ENCODE measurements at regions of chr4 and their contacts with region 1.

Region 1: DNA sequence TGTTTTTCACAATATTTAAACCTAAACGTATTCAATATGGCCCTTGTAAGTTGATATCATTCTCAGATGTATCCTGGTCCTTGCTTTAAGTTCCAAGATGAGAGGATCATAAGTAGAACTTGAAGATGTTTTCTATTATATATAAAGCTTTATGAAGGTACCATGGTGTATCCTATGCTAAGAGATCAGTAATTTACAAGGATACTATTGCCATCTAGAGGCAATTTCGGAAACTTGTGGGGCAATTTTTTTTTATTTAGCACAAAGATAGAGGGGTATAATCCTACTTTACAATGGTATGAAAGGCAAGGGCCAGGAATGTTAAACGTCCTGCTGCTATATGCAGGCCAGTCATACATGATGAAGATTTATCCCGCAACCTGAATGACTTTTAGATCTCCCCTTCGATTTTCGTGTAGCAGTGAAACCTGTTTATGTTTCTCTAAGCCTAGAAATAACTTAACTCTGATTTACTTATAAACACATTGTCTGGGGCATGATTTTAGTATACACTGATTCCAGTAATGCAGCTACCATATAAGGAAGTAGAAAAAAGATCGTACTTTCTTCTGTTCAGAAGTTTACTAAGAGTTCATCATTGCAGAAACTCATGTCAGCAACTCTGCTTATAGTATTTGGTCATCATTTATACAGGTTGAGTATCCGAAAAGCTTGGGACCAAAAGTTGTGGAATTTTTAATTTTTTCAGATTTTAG is 2.6 kb downstream of the SLC25A31 start:
- DNase-seq: peak in 1 of 2 experiments; percentile 31
- H3K4me3 ChIP-seq: no peak overlapping the region
- H3K4me3 Mint-ChIP-seq: no peak overlapping the region
- H3K27ac Mint-ChIP-seq: no peak overlapping the region
- H3K4me1 ChIP-seq: no peaks in the 10 kb centered on the region
- H3K4me1 Mint-ChIP-seq: no peaks in the 10 kb centered on the region
- H3K27me3 ChIP-seq: no peaks in the 10 kb centered on the region
- H3K27me3 Mint-ChIP-seq: no peaks in the 10 kb centered on the region
- CTCF ChIP-seq: peak; percentile 31 to 54

Region 2: DNA sequence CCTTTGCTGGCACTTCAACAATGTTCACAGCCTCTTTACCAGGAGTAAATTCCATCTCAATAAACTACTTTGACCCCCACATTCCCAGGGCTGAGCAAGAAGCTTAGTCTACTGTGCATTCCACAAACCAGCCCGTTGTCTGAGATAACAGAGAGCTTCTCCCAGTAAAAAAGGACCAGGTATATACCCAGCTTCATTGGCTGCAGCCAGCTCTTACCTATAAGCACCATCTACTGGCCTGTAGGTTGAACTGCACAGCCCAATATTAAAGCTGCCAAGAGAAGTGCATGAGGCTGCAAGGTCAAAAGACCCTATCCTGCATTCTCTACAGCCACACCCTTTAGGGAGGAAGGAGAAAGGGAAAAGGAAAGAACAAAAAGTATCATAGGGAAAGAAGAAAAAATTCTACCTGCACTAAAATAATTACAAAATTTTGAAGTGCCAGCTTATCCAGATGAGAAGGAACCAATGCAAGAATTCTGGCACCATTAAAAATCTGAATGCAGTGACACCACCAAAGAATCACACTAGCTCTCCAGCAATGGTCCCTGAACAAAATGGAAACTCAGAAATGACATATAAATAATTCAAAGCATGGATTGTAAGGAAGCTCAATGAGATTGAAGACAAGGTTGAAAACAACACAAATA is 145.7 kb before region 1 on chr4:
- CTCF ChIA-PET with region 1: interaction called, 12 read pairs
- POLR2A ChIA-PET with region 1: no interaction called
- intact Hi-C with region 1: no loop called
- DNase-seq: peak; percentile 49 to 56
- H3K4me3 ChIP-seq: no peak overlapping the region
- H3K4me3 Mint-ChIP-seq: no peak overlapping the region
- H3K27ac Mint-ChIP-seq: no peak overlapping the region
- H3K4me1 ChIP-seq: no peaks in the 10 kb centered on the region
- H3K4me1 Mint-ChIP-seq: no peaks in the 10 kb centered on the region
- H3K27me3 ChIP-seq: no peaks in the 10 kb centered on the region
- H3K27me3 Mint-ChIP-seq: peaks cover 6% of the 10 kb centered on the region
- CTCF ChIP-seq: peak; percentile 62 to 66

Region 3: DNA sequence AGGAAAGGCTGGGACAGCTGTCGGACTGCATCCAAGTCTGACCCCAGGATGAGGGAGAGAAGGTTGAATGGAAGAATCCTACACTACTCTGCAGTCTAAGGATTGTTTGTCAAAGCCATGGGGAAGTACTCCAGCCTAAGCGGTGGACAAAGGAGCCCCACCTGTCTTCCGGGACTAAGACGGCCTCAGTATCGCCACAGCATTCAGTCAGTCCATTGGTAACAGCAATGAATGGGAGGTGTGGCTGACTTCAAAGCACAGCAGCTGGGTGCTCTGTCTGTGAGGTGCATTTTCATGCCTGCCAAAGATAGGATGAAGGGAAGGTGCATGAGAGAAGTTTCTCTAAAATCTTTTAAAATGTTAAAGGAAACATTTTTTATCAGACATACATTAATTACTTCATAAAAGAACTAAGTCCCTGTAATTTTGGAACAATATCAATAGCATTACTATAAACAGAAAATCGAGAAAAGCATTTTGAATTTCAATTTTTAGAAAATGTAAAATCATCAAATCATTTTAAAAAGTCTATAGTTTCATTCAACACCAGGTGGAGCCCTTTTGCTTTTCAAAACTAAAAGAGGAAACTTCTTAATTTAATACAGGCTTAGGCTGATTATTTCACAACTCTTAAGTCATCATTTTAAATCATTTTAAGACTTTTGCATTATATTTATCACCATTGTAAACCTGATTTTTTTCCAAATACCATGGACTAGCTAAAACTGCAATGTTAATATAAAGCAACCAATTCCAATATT is 127.6 kb before region 1 on chr4:
- CTCF ChIA-PET with region 1: interaction called, 9 read pairs
- POLR2A ChIA-PET with region 1: no interaction called
- intact Hi-C with region 1: loop called (anchors 1 kb)
- DNase-seq: no peak
- H3K4me3 ChIP-seq: no peak overlapping the region
- H3K4me3 Mint-ChIP-seq: no peak overlapping the region
- H3K27ac Mint-ChIP-seq: no peak overlapping the region
- H3K4me1 ChIP-seq: no peaks in the 10 kb centered on the region; the same call in 1 of the 2 replicates
- H3K4me1 Mint-ChIP-seq: no peaks in the 10 kb centered on the region
- H3K27me3 ChIP-seq: no peaks in the 10 kb centered on the region
- H3K27me3 Mint-ChIP-seq: peaks cover 2% of the 10 kb centered on the region
- CTCF ChIP-seq: peak in 1 of 2 experiments; percentile 40

Region 4: DNA sequence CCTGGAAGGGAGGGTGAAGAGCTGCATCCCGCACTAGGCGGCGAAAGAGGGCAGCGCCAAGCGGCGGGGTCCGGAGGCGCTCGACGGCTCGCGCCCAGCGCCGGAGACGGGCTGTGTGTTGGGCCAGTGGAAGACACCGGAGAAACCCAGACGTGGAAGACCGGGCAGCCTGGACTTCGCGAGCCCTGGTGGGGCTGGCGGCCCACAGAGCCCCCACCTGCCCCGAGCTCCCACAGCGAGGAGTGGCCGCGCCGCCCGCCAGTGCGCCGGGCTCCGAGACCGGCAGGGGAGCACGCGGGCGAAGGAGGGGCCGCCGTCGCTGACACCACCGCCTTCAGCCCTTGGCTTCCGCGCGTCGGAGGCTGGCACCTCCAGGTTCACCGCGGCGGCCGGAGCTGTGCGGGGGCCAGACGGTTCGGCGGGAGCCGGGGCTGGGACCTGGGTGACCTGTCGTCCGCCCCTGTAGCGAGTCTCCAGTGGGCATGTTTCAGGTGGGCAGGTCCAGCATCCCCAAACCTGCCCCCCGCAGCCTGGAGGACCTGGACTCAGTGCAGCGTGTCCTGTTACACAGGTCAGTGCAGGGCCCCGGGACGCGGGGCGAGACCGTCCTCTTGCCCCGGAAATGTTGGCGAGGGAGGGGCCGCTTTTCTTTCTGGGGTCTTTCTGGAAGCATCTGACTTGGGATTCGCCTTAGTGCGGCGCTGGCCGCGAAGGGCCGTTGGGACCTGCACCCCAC is 109.7 kb before region 1 on chr4:
- CTCF ChIA-PET with region 1: interaction called, 8 read pairs
- POLR2A ChIA-PET with region 1: no interaction called
- intact Hi-C with region 1: loop called (anchors 5 kb)
- DNase-seq: peak; percentile 65 to 70
- H3K4me3 ChIP-seq: peak overlapping the region; percentile 34
- H3K4me3 Mint-ChIP-seq: peak overlapping the region; percentile 71
- H3K27ac Mint-ChIP-seq: no peak overlapping the region
- H3K4me1 ChIP-seq: no peaks in the 10 kb centered on the region
- H3K4me1 Mint-ChIP-seq: no peaks in the 10 kb centered on the region
- H3K27me3 ChIP-seq: no peaks in the 10 kb centered on the region
- H3K27me3 Mint-ChIP-seq: peaks cover 16% of the 10 kb centered on the region
- CTCF ChIP-seq: peak; percentile 25 to 55

Region 5: GRCh38 chr4:127788517-127788916 is 55.7 kb after region 1 on chr4:
- CTCF ChIA-PET with region 1: no interaction called
- POLR2A ChIA-PET with region 1: no interaction called
- intact Hi-C with region 1: loop called (anchors 1 kb)
- DNase-seq: peak in 1 of 2 experiments; percentile 35
- H3K4me3 ChIP-seq: no peak overlapping the region
- H3K4me3 Mint-ChIP-seq: no peak overlapping the region
- H3K27ac Mint-ChIP-seq: no peak overlapping the region
- H3K4me1 ChIP-seq: peaks cover 7% of the 10 kb centered on the region; the same call in 1 of the 2 replicates
- H3K4me1 Mint-ChIP-seq: no peaks in the 10 kb centered on the region
- H3K27me3 ChIP-seq: no peaks in the 10 kb centered on the region
- H3K27me3 Mint-ChIP-seq: no peaks in the 10 kb centered on the region
- CTCF ChIP-seq: peak; percentile 33 to 43